Ascending aorta (tissue), 2 donors: ENCODE measurements at regions of chr6 and their contacts with region 1.

Region 1: DNA sequence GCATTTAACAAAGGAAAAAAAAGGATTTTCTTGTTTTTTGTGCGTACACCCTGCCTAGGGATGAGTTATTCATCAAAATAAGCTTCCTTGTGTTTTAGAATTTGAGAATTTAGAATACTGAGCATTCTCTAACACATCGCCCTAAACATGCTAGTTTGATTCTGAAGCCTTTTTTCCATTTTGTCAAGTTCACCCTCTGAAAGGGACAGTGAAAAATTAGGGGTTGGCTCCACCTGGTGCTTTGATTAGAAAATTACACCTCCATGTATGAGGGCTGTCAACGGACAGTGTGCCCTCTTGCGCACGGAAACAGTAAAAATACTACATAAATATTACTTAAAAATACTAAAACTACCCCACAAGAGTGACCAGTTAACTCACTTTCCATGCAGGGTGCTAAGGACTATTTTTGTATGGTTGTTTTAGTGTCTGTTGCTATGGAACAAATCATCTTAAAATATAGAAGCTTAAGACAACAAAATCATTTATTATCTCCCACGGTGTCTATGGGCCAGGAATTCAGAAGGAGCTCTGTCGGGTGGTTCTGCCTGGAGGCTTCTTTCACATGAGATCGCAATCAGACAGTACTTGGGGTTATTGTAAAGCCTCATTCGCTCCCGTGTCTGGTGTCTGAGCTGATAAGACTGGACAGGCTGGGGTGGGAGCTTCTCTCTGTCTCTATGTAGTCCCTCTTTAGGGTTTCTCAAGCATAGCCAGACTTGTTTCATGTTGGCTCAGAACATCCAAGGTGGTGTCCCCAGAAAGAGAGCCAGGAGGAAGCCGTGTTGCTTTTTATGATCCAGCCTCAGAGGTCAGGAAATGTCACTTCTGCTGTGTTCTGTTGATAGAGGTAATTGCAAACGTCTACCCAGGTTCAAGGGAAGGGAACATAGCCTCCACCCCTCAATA is 41.1 kb upstream of the TMEM170B start:
- DNase-seq: peak in 1 of 2 donors; percentile 80
- H3K4me3 ChIP-seq: peak overlapping the region in 1 of 2 donors; percentile 17
- H3K27ac ChIP-seq: peak overlapping the region; percentile 14 to 33
- H3K4me1 ChIP-seq: peaks cover 0 to 8% of the 10 kb centered on the region in 2 donors
- H3K27me3 ChIP-seq: no peaks in the 10 kb centered on the region
- CTCF ChIP-seq: peak; percentile 83 to 93 (median 91)

Region 2: GRCh38 chr6:11144393-11144851 is 352.0 kb before region 1 on chr6:
- intact Hi-C with region 1: loop called (anchors 1 kb)
- DNase-seq: peak; percentile 16 to 87
- H3K4me3 ChIP-seq: no peak overlapping the region
- H3K27ac ChIP-seq: no peak overlapping the region
- H3K4me1 ChIP-seq: no peaks in the 10 kb centered on the region
- H3K27me3 ChIP-seq: no peaks in the 10 kb centered on the region
- CTCF ChIP-seq: peak; percentile 90 to 94 (median 92)

Region 3: DNA sequence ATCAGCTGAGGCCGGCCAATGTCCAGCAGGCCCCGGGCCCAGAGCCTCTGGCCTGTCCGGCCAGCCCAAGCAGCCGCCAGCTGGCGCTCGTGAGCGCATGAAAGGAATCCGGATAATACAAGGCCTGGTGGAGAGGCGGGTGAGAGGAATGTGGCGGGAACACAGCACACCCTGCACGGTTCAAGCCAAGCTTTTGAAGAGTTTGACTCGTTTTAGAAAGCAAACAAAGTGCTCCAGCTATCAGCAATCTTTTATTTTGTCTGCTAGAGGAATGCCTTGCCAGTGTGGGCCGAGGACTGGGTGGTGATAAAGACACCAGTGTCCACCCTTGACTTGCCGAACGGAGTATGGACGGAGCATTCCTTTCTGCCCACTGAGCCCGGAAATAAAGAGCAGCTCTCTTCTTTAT is 254.6 kb before region 1 on chr6:
- intact Hi-C with region 1: loop called (anchors 1 kb)
- DNase-seq: peak in 1 of 2 donors; percentile 88
- H3K4me3 ChIP-seq: no peak overlapping the region
- H3K27ac ChIP-seq: peak overlapping the region; percentile 37 to 61
- H3K4me1 ChIP-seq: peaks cover 11 to 34% of the 10 kb centered on the region in 2 donors
- H3K27me3 ChIP-seq: no peaks in the 10 kb centered on the region
- CTCF ChIP-seq: peak; percentile 82 to 96 (median 88)

Region 4: GRCh38 chr6:11324453-11325015 is 171.9 kb before region 1 on chr6:
- intact Hi-C with region 1: no loop called
- DNase-seq: no peak
- H3K4me3 ChIP-seq: no peak overlapping the region
- H3K27ac ChIP-seq: no peak overlapping the region
- H3K4me1 ChIP-seq: peaks cover 0 to 5% of the 10 kb centered on the region in 2 donors
- H3K27me3 ChIP-seq: no peaks in the 10 kb centered on the region
- CTCF ChIP-seq: no peak

Region 5: DNA sequence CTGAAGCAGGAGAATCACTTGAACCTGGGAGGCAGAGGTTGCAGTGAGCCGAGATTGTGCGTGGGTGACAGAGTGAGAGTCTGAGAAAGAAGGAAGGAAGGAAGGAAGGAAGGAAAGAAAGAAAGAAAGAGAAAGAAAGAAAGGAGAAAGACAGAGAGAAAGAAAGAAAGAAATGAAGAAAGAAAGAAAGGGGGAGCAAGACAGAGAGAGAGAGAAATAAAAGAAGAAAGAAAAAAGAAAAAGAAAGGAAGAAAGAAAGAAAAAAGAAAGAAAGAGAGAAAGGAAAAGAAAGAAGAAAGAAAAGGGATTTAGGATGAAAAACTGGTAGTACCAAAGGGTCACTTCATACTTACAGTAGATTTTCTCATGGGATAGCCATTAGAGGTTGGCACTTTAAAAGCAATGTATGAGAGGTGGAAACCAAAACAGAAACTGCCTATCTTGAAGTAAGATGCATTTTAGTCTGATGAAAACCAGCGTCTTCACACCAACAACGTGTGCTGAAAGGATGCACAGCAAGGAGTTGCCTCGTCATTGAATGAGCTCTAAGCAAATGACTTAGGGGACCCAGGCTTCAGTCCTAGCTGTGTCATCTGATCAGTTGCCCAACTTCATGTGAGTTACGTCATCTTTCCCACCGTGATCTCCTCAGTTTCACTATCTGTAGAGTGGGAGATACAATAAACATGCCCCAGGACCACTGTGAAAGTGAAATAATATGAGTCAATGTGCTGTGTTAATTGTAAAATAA is 130.0 kb before region 1 on chr6:
- intact Hi-C with region 1: loop called (anchors 5 kb)
- DNase-seq: no peak
- H3K4me3 ChIP-seq: no peak overlapping the region
- H3K27ac ChIP-seq: peak overlapping the region; percentile 78 to 87
- H3K4me1 ChIP-seq: peaks cover 4 to 16% of the 10 kb centered on the region in 2 donors
- H3K27me3 ChIP-seq: no peaks in the 10 kb centered on the region
- CTCF ChIP-seq: no peak

Region 6: GRCh38 chr6:11429577-11429976 is 66.8 kb before region 1 on chr6:
- intact Hi-C with region 1: no loop called
- DNase-seq: no peak
- H3K4me3 ChIP-seq: no peak overlapping the region
- H3K27ac ChIP-seq: peak overlapping the region; percentile 29 to 83
- H3K4me1 ChIP-seq: peaks cover 30 to 75% of the 10 kb centered on the region in 2 donors
- H3K27me3 ChIP-seq: no peaks in the 10 kb centered on the region
- CTCF ChIP-seq: no peak